ENCODE measurements at regions of chr5 and their contacts with region 1.

Region 1: GRCh38 chr5:135671966-135672365 is 93.2 kb upstream of the CXCL14 start:
- DNase-seq: no peak
- ATAC-seq: no peak
- H3K4me3 ChIP-seq: no peak overlapping the region
- H3K27ac ChIP-seq: no peak overlapping the region
- H3K4me1 ChIP-seq: no peaks in the 10 kb centered on the region
- H3K27me3 ChIP-seq: no peaks in the 10 kb centered on the region
- CTCF ChIP-seq: no peak
- POLR2A ChIP-seq: no peak

Region 2: GRCh38 chr5:135714126-135714894 is 42.3 kb after region 1 on chr5:
- in situ Hi-C with region 1: no loop called
- intact Hi-C with region 1: loop called (anchors 2 kb)
- DNase-seq: no peak
- ATAC-seq: no peak
- H3K4me3 ChIP-seq: no peak overlapping the region
- H3K27ac ChIP-seq: no peak overlapping the region
- H3K4me1 ChIP-seq: no peaks in the 10 kb centered on the region
- H3K27me3 ChIP-seq: peaks cover 0 to 2% (median 0%) of the 10 kb centered on the region in 3 donors
- CTCF ChIP-seq: no peak
- POLR2A ChIP-seq: no peak